ENCODE measurements at regions of chr11 and their contacts with region 1.

Region 1: GRCh38 chr11:66222358-66223149 is 45.9 kb upstream of the RAB1B start:
- DNase-seq: peak; percentile 81 to 96 (median 90)
- H3K4me3 ChIP-seq: peak overlapping the region in 17 of 59 donors; percentile 1 to 49 (median 27)
- H3K27ac ChIP-seq: peak overlapping the region in 19 of 59 donors; percentile 1 to 68 (median 44)
- H3K27me3 ChIP-seq: no peaks in the 10 kb centered on the region
- CTCF ChIP-seq: peak in 55 of 56 donors; percentile 98 to 100 (median 99)

Region 2: DNA sequence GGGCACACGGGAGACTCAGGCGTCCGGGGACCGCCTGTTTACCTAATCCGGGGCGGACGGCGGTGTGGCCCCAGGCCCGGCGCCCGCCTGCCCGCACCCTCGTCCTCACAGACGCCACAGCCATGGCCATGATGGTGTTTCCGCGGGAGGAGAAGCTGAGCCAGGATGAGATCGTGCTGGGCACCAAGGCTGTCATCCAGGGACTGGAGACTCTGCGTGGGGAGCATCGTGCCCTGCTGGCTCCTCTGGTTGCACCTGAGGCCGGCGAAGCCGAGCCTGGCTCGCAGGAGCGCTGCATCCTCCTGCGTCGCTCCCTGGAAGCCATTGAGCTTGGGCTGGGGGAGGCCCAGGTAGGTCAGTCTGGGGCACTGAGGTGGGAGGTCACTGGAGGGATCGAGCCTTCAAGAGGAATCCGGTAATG is 35.9 kb after region 1 on chr11:
- intact Hi-C with region 1: loop called (anchors 1 to 2 kb)
- DNase-seq: no peak
- H3K4me3 ChIP-seq: peak overlapping the region; percentile 64 to 98 (median 94)
- H3K27ac ChIP-seq: peak overlapping the region in 58 of 59 donors; percentile 20 to 95 (median 90)
- H3K27me3 ChIP-seq: no peaks in the 10 kb centered on the region
- CTCF ChIP-seq: peak in 17 of 56 donors; percentile 1 to 40 (median 13)

Region 3: GRCh38 chr11:66268283-66268951 is 45.9 kb after region 1 on chr11 and contains the start of gene RAB1B:
- intact Hi-C with region 1: loop called in 1 of 2 experiments (anchors 2 kb)
- DNase-seq: peak; percentile 99 to 100 (median 99)
- H3K4me3 ChIP-seq: peak within 1 kb of the TSS; percentile 65 to 100 (median 91)
- H3K27ac ChIP-seq: peak within 1 kb of the TSS; percentile 89 to 100 (median 98)
- H3K27me3 ChIP-seq: no peaks in the 10 kb centered on the region
- CTCF ChIP-seq: peak in 8 of 56 donors; percentile 3 to 42 (median 12)
- total RNA-seq, gene RAB1B: 94.3 to 135 (median 115) TPM

Region 4: DNA sequence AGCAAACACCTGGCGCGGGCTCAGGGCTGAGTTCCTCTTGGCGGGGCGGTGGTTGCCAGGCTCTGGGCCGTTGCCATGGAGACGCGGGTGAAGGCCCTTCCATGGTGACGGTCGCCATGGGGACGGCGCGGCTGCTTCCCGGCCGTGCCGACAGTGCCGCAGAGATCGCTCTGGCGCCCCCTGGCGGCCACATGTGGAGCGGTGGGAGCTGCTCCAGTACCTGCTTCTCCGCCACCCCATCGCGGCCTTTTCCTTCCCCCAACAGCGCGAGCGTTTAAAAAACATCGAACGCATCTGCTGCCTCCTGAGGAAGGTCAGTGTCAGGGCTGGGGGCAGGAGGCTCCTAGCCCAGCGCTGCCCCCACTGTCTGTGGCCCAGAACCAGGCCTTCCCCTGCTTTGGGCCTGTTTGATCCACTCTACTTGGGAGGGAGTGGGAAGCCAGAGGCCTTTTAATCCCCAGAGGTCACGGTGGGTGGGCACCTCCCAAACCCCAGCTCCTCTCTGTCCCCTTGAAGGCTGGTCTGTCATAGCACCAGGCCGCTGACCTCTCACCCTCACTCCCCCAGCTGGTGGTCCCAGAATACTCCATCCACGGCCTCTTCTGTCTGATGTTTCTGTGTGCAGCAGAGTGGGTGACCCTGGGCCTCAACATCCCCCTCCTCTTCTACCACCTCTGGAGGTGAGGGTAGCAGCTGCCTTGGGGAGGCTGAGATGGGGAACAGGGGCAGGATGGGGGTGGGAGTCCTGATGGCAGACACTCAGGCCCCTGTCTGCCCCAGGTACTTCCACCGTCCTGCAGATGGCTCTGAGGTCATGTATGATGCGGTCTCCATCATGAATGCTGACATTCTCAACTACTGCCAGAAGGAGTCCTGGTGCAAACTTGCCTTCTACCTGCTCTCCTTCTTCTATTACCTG is 60.2 kb after region 1 on chr11:
- intact Hi-C with region 1: loop called in 1 of 2 experiments (anchors 10 kb)
- DNase-seq: peak; percentile 98 to 100 (median 100)
- H3K4me3 ChIP-seq: peak overlapping the region in 55 of 59 donors; percentile 6 to 60 (median 38)
- H3K27ac ChIP-seq: peak overlapping the region in 56 of 59 donors; percentile 25 to 100 (median 75)
- H3K27me3 ChIP-seq: no peaks in the 10 kb centered on the region
- CTCF ChIP-seq: peak; percentile 91 to 100 (median 99)

Region 5: GRCh38 chr11:66328307-66329144 is 106.0 kb after region 1 on chr11:
- intact Hi-C with region 1: loop called in 1 of 2 experiments (anchors 5 kb)
- DNase-seq: peak; percentile 70 to 90 (median 76)
- H3K4me3 ChIP-seq: peak overlapping the region in 42 of 59 donors; percentile 6 to 54 (median 28)
- H3K27ac ChIP-seq: peak overlapping the region in 23 of 59 donors; percentile 1 to 77 (median 32)
- H3K27me3 ChIP-seq: no peaks in the 10 kb centered on the region
- CTCF ChIP-seq: peak; percentile 88 to 98 (median 97)